Activated T-helper 1 cell treated with anti-CD3 and anti-CD28 coated beads, Interleukin-12 subunit alpha, Interleukin-12 subunit beta, Interleukin-2, Interleukin-4 antibody, amounts not matched to agents 30 ng/mL and 10 ng/mL and 1 ng/mL, durations not matched to agents 14 hours and 24 hours and 36 hours (primary cell): ENCODE measurements at regions of chr9 and their contacts with region 1.

Region 1: GRCh38 chr9:21974548-21975409 is 19.4 kb downstream of the CDKN2A start:
- DNase-seq: no peak
- H3K4me3 Mint-ChIP-seq: peak overlapping the region; percentile 86
- H3K27ac Mint-ChIP-seq: peak overlapping the region; percentile 66
- H3K4me1 Mint-ChIP-seq: peaks cover 40% of the 10 kb centered on the region
- H3K27me3 Mint-ChIP-seq: peaks cover 91% of the 10 kb centered on the region

Region 2: DNA sequence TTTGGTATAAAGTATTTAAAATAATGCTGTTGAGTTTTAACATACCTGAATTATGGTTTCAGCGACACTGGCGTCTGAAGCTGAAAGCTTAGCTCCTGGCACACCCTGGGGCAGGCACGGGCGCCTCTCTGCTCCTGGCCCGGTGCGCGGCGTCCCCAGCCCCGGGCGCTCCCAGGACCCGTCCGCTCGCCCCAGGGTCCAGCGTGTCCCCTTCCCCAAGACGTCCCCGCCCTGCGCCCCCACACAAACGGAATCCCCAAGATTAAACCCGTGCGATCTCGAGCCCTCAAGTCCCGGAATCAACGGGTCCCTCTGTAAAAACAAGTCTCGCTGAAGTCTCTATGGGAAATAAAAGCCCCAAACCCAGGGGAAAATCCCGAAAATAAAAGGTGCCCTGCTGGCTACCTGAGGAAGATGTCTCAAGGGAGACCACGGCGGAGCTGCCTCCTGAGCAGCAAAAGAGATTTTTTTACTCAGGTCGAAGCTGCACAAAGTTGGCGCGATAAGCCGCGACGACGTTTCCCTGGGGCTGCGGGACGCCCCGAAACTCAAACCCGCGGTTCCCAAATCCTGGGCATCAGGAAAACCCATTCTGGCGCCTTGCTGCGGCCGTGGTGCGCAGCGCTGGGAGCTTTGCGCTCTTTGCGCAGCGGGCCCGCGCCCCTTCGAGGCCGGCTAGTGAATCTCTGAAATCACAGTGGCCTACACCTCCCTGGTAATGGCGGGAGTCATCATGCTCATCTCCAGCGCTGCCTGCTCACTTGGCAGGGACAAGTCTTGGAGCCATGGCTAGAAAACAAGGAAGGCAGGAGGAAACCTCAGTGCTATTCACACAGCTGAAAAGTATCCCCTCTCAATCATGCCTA is 572.2 kb before region 1 on chr9:
- intact Hi-C with region 1: loop called (anchors 10 kb)
- DNase-seq: no peak
- H3K4me3 Mint-ChIP-seq: no peak overlapping the region
- H3K27ac Mint-ChIP-seq: no peak overlapping the region
- H3K4me1 Mint-ChIP-seq: no peaks in the 10 kb centered on the region
- H3K27me3 Mint-ChIP-seq: peaks cover 53% of the 10 kb centered on the region

Region 3: DNA sequence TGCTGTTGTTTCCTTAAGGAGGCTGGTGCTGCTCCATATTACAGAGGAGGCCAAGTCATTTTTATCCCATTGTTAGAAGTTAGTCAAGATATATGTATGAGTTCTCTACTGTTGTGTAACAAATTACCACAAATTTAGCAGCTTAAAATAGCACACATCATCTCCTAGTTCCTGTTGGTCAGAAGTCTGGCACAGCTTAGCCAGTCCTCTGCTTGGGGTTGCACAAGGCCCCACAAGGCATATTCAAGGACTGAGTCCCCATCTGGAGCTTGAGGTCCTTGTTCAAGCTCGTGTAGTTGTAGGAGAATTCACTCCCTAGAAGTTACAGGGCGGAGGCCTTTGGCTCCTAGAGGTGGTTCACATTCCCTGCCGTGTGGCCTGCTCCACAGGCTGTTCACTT is 157.6 kb before region 1 on chr9:
- intact Hi-C with region 1: no loop called
- DNase-seq: no peak
- H3K4me3 Mint-ChIP-seq: no peak overlapping the region
- H3K27ac Mint-ChIP-seq: no peak overlapping the region
- H3K4me1 Mint-ChIP-seq: peaks cover 22% of the 10 kb centered on the region
- H3K27me3 Mint-ChIP-seq: no peaks in the 10 kb centered on the region

Region 4: DNA sequence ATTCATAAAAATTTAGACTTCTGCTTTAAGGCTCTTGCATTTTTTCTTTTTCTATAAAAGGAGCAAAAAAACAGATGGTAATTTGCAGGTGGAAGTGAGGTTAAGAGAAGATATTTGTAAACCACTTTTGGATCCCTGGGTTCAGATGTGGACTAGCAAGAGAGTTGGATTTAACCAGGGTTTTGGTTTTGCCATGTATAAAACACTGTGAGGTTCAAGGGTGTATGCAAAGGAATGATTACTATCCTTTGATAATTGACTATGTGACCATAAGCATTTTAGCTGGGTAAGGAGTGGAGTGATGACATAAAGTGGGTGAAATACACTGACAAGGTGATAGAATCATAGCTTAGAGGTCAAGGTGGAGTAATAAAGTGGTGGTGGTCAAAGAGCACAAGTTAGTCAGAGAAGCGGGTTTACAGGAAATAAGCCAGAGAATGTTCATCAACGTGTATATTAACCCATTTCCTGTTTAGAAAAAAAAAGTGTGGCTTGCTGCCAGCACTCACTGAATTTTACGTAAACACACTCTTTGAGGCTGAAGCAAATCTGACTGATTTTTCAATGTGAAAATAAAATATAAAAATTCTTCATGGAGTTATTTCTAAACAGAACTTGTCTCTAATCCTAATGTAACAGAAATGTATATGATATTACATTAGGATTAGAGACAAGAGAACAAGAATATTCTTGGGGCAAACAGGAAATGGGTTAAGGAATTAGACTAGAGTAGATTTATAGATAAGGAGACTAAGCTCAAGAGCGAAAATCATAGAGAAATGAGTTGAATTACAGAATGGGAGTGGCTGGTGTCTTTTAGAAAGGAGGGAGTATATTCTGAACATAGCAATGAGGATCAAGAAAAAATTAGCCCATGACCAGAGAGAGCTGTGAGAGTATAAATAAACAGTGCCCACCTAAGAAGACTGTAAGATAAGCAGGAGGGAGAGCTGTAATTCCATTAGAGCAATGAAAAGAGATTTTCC is 55.1 kb before region 1 on chr9:
- intact Hi-C with region 1: no loop called
- DNase-seq: peak; percentile 21
- H3K4me3 Mint-ChIP-seq: peak overlapping the region; percentile 59
- H3K27ac Mint-ChIP-seq: peak overlapping the region; percentile 76
- H3K4me1 Mint-ChIP-seq: peaks cover 34% of the 10 kb centered on the region
- H3K27me3 Mint-ChIP-seq: no peaks in the 10 kb centered on the region

Region 5: GRCh38 chr9:21933865-21934264 is 40.9 kb before region 1 on chr9:
- intact Hi-C with region 1: no loop called
- DNase-seq: no peak
- H3K4me3 Mint-ChIP-seq: no peak overlapping the region
- H3K27ac Mint-ChIP-seq: no peak overlapping the region
- H3K4me1 Mint-ChIP-seq: no peaks in the 10 kb centered on the region
- H3K27me3 Mint-ChIP-seq: no peaks in the 10 kb centered on the region

Region 6: DNA sequence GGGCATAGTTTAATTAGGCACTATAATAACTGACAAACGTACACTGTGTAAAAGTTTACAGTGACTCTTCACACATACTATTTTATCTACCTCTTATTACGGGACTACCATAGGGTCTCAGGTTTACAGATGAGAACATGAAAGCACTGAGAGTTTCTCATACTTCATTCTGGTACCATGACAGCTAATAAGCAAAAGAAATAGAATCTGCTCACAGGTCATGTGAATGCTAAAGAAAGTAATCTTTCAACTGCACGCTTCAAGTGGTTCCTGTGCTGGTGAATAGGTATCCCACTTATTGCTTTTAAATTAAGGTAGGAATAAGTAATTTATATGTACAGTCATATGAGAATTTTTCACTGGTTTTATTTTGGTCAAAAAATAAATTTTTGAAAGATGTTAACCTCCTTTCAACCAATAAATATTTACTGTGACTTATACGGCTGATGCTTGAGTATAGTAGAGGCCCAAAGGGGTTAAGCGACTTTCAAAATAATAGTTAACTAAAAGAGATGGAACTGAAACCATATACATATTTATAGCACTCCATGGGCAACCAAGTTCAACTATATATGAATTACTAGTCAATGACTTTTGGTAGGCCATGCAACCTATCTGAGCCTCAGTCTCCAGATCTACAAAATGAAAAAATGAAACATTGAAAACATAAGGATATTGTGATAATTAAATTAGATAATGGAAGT is 11.3 kb after region 1 on chr9:
- intact Hi-C with region 1: loop called (anchors 1 kb)
- DNase-seq: no peak
- H3K4me3 Mint-ChIP-seq: no peak overlapping the region
- H3K27ac Mint-ChIP-seq: no peak overlapping the region
- H3K4me1 Mint-ChIP-seq: peaks cover 42% of the 10 kb centered on the region
- H3K27me3 Mint-ChIP-seq: peaks cover 76% of the 10 kb centered on the region

Region 7: DNA sequence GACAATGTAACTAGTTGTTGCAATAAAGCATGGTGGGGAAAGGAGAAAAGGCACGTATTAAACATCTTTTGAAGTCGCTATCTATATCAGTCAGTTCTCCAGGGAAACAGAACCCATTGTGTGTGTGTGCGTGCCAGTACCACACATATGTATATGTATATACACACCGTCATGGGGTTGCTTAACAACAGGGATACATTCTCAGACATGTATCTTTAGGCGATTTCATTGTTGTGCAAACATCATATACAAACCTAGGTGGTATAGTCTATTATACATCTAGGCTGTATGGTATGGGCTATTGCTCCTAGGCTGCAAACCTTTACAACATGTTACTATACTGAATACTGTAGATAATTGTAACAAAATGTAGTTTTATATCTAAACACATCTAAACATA is 22.1 kb after region 1 on chr9:
- intact Hi-C with region 1: no loop called
- DNase-seq: no peak
- H3K4me3 Mint-ChIP-seq: peak overlapping the region; percentile 94
- H3K27ac Mint-ChIP-seq: peak overlapping the region; percentile 19
- H3K4me1 Mint-ChIP-seq: peaks cover 30% of the 10 kb centered on the region
- H3K27me3 Mint-ChIP-seq: peaks cover 54% of the 10 kb centered on the region